Left cardiac atrium (tissue), 4 donors: ENCODE measurements at regions of chr11 and their contacts with region 1.

Region 1: GRCh38 chr11:1652771-1653540 is 23.4 kb downstream of the KRTAP5-5 start:
- DNase-seq: peak; percentile 77
- ATAC-seq: peak; percentile 83 to 88

Region 2: DNA sequence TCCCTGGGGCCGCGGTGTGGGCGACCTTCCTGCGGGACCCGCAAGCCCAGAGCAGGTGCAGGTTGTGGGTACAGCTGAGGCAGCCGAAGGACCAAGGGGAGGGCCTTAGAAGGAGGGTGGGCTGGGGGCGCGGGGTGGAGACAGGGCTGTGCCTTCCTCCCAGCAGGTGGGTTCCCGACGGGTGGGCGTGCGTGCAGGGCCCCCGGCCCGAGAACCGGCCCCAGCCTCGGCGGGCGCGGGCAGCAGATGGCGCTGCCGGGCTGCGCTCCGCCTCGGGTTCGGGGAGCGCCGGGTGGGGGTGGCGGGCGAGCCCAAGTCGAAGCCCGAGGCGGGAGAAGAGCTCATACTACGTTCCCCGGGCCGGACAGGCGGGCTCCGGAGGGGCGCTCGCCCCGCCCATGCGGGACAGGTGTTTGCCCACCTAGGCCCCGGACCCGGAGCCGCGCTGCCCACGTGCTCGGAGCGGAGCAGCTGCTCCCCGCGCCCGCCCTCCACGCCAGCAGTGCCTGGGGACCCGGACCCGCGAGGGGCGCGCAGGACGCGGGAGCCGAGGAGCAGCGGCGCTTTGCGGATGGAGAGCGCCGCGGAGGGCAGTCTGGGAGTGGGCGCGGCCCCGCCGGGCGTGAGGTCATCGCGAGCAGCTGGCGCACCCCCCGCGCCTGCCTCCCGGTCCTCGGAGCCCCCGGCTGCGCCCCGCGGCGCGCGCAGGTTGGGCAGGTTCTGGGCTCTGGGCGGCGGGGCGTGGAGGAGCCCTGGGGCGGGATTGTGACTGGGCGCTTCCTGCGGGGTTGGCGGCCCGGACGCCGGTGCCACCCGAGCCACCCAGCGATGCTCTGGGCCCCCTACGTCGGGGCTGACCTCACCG is 106.2 kb before region 1 on chr11:
- intact Hi-C with region 1: no loop called
- DNase-seq: peak; percentile 58
- ATAC-seq: peak; percentile 72 to 74

Region 3: GRCh38 chr11:1572197-1573076 is 80.5 kb before region 1 on chr11 and contains the start of gene DUSP8:
- intact Hi-C with region 1: no loop called
- DNase-seq: peak; percentile 95
- ATAC-seq: peak; percentile 77 to 85
- total RNA-seq, gene DUSP8: 9.0 to 21.7 TPM

Region 4: DNA sequence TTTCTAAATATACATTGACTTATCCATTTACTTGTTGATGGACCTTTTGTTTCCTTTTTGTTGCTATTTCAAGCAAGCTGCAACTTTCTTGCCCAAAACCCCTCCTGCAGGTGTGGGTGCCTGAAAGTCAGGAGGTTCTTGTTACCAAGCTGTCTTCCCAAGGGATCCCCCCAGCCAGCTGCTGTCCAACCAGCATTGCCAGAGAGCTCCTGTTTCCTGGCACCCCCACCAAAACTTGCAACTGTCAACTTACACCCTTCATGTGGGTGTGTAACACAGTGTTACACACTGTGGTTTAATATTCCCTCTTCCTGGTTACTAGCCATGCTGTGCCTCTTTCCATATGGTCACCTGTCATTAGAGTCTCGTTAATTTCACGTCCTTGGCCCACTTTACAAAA is 66.3 kb before region 1 on chr11:
- intact Hi-C with region 1: no loop called
- DNase-seq: no peak
- ATAC-seq: no peak

Region 5: DNA sequence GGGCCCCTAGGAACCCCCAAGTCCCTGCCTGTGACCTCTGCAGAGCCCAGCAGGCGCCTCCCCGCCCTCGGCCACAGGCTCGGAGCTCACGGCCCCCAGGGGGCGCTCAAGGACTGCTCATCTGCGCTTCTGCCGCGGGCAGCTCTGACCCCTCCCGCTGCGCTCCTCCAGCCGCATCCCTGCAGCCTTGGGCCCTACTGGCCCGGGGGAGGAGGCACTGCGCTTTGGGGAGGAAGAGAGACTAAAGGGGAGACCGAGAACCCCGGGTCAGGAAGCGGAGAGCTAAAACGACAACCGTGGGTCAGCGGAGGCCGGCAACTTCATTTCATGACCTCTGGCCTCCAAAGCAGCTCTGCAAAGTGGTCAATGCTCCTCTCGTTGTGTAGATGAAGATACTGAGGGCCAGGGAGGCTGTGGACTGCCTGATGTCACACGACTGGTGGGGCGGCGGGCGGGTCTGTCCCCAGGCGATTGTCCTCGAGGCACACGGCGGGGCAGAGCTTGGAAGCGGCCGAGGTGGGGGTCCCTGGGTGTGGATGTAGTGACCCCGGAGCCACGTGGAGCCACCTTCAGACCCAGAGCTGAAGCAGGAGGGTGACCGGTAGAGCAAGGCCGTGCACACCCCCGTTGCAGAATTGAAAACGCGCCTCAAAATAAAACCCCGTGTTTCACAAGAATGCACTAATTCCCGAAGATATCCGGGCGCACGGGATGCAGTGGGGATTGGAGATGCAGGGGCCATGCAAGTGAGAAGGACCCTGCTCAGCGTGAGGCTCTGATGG is 41.3 kb after region 1 on chr11:
- intact Hi-C with region 1: loop called (anchors 5 kb)
- DNase-seq: peak; percentile 88
- ATAC-seq: peak; percentile 97

Region 6: GRCh38 chr11:1832211-1832919 is 179.4 kb after region 1 on chr11:
- intact Hi-C with region 1: loop called (anchors 2 to 5 kb)
- DNase-seq: peak; percentile 60
- ATAC-seq: peak; percentile 71 to 74